B cell (primary cell): ENCODE measurements at regions of chr2 and their contacts with region 1.

Region 1: DNA sequence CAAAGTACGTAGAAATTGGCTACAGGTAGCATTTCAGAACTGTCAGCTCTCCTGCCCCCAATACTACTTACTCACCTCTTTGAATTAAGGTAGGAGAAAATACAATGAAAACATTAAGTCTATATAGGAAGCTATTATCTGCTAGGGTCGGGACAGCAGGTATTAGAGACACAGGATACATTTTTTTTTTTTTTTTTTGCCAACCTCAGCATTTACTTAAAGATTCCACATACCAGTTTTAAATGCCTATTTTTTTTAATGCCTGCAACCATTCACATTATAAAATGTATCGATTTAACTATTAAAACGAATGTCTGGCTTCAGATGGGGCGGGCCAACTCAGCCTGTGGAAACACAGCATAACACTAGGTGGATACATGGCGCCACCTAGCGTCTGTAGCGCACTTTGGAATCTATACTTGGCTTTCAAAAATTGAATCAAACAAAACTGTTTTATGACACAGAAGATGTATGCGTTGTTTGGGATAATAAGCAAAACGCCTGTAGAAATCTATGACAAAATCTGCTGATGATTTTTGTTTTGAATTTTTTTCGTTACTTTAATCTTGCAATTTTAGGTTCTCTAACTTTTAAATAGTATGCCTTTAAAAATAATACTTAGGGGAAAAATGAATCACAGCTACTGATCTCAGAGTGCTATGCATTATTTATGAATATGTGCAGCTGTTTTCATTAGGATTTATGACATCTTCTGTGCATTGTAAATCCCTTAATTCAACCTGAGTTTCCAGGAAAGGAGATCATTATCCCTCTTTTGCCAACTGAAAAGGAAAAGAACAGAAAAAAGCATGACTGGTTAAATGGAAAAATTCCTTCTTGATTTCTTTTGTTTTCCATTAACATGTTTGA is 261.0 kb downstream of the NYAP2 start:
- DNase-seq: peak; percentile 75
- ATAC-seq: peak; percentile 71
- H3K4me3 ChIP-seq: no peak overlapping the region
- H3K4me3 Mint-ChIP-seq: no peak overlapping the region
- H3K27ac ChIP-seq: no peak overlapping the region
- H3K27ac Mint-ChIP-seq: no peak overlapping the region
- H3K4me1 ChIP-seq: no peaks in the 10 kb centered on the region
- H3K4me1 Mint-ChIP-seq: no peaks in the 10 kb centered on the region
- H3K27me3 ChIP-seq: peaks cover 0 to 5% (median 0%) of the 10 kb centered on the region in 4 experiments
- H3K27me3 Mint-ChIP-seq: peaks cover 22% of the 10 kb centered on the region
- CTCF ChIP-seq: peak; percentile 97

Region 2: DNA sequence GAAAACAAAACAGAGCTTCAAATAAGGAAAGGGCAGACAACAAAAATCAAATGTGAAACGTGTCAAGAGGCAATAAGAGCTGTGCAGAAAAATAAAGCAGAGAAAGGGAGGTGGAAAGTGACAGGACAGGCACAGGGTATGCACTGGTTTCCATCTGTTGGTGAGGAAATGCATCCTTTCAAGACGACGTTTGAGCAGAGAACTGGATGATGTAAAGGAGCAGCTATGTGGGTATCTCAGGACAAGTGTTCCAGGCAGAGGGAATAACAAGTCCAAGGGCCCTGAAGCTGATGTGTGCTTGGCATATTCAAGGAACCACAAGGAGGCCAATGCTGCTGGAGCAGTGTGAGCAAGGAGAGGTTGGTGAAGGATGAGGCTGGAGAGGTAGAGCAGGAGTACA is 1452.5 kb before region 1 on chr2:
- CTCF ChIA-PET with region 1: no interaction called
- POLR2A ChIA-PET with region 1: interaction called, 11 read pairs
- intact Hi-C with region 1: no loop called
- DNase-seq: no peak
- ATAC-seq: no peak
- H3K4me3 ChIP-seq: no peak overlapping the region
- H3K4me3 Mint-ChIP-seq: no peak overlapping the region
- H3K27ac ChIP-seq: no peak overlapping the region
- H3K27ac Mint-ChIP-seq: no peak overlapping the region
- H3K4me1 ChIP-seq: no peaks in the 10 kb centered on the region
- H3K4me1 Mint-ChIP-seq: no peaks in the 10 kb centered on the region
- H3K27me3 ChIP-seq: no peaks in the 10 kb centered on the region
- H3K27me3 Mint-ChIP-seq: peaks cover 4% of the 10 kb centered on the region
- CTCF ChIP-seq: no peak

Region 3: GRCh38 chr2:224357098-224357901 is 1303.2 kb before region 1 on chr2:
- CTCF ChIA-PET with region 1: no interaction called
- POLR2A ChIA-PET with region 1: no interaction called
- intact Hi-C with region 1: loop called (anchors 1 kb)
- DNase-seq: peak; percentile 79
- ATAC-seq: peak; percentile 81
- H3K4me3 ChIP-seq: no peak overlapping the region
- H3K4me3 Mint-ChIP-seq: no peak overlapping the region
- H3K27ac ChIP-seq: no peak overlapping the region
- H3K27ac Mint-ChIP-seq: no peak overlapping the region
- H3K4me1 ChIP-seq: no peaks in the 10 kb centered on the region
- H3K4me1 Mint-ChIP-seq: no peaks in the 10 kb centered on the region
- H3K27me3 ChIP-seq: no peaks in the 10 kb centered on the region
- H3K27me3 Mint-ChIP-seq: peaks cover 11% of the 10 kb centered on the region
- CTCF ChIP-seq: peak; percentile 87

Region 4: GRCh38 chr2:224927646-224928173 is 732.8 kb before region 1 on chr2:
- CTCF ChIA-PET with region 1: interaction called, 4 read pairs
- POLR2A ChIA-PET with region 1: no interaction called
- intact Hi-C with region 1: loop called (anchors 2 kb)
- DNase-seq: no peak
- ATAC-seq: no peak
- H3K4me3 ChIP-seq: no peak overlapping the region
- H3K4me3 Mint-ChIP-seq: peak overlapping the region; percentile 4
- H3K27ac ChIP-seq: peak overlapping the region; percentile 38 to 43
- H3K27ac Mint-ChIP-seq: peak overlapping the region; percentile 78
- H3K4me1 ChIP-seq: peaks cover 86 to 87% of the 10 kb centered on the region in 2 donors
- H3K4me1 Mint-ChIP-seq: peaks cover 94% of the 10 kb centered on the region
- H3K27me3 ChIP-seq: no peaks in the 10 kb centered on the region
- H3K27me3 Mint-ChIP-seq: no peaks in the 10 kb centered on the region
- CTCF ChIP-seq: no peak

Region 5: GRCh38 chr2:225122583-225123486 is 537.7 kb before region 1 on chr2:
- CTCF ChIA-PET with region 1: interaction called, 21 read pairs
- POLR2A ChIA-PET with region 1: no interaction called
- intact Hi-C with region 1: loop called (anchors 1 kb)
- DNase-seq: peak; percentile 20
- ATAC-seq: no peak
- H3K4me3 ChIP-seq: no peak overlapping the region
- H3K4me3 Mint-ChIP-seq: no peak overlapping the region
- H3K27ac ChIP-seq: no peak overlapping the region
- H3K27ac Mint-ChIP-seq: no peak overlapping the region
- H3K4me1 ChIP-seq: no peaks in the 10 kb centered on the region
- H3K4me1 Mint-ChIP-seq: no peaks in the 10 kb centered on the region
- H3K27me3 ChIP-seq: no peaks in the 10 kb centered on the region
- H3K27me3 Mint-ChIP-seq: peaks cover 14% of the 10 kb centered on the region
- CTCF ChIP-seq: peak; percentile 63

Region 6: DNA sequence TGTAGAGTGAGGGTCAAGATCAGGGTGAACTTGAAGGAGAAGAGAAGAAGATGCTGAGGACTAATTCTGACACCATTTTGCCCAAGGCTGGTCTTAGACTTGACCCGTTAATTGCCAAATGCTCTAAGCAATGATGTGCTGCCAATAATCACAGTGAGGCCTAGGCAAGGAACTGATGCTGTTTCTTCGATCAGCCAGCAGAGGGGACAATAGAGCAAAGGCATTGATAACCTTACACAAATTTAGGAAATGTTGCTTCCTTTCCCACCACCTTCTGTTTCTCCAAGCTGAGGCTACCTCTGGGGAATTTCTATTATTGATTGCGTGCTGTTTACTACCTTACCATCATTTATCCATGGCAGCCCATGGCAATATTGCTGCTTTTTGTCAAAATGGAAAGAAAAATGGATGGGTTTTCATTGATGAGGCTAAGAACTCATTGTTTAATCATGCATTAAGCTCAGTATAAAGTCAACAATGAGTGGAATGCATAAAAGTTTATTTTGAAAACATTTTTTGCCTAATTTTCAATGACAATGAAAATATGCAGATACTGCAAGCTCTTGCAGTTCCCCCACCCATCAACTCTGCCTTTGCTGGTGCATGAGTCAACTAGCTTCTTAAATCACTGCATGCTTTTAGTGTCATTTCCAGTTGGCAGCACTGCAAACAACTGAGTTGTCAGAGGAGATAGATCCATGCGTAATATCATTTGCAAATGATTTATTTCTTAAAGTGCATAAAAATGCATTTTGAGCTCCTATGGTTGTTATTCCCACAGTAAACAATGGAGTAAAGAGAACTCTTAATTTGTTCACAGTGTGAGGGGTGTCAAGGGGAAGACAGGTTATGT is 377.4 kb before region 1 on chr2:
- CTCF ChIA-PET with region 1: interaction called, 11 read pairs
- POLR2A ChIA-PET with region 1: no interaction called
- intact Hi-C with region 1: loop called (anchors 5 kb)
- DNase-seq: peak; percentile 35
- ATAC-seq: no peak
- H3K4me3 ChIP-seq: no peak overlapping the region
- H3K4me3 Mint-ChIP-seq: no peak overlapping the region
- H3K27ac ChIP-seq: no peak overlapping the region
- H3K27ac Mint-ChIP-seq: no peak overlapping the region
- H3K4me1 ChIP-seq: no peaks in the 10 kb centered on the region
- H3K4me1 Mint-ChIP-seq: no peaks in the 10 kb centered on the region
- H3K27me3 ChIP-seq: peaks cover 0 to 2% (median under 1%) of the 10 kb centered on the region in 4 experiments
- H3K27me3 Mint-ChIP-seq: no peaks in the 10 kb centered on the region
- CTCF ChIP-seq: peak; percentile 80

Region 7: GRCh38 chr2:225649274-225649673 is 11.2 kb before region 1 on chr2:
- CTCF ChIA-PET with region 1: interaction called, 27 read pairs
- POLR2A ChIA-PET with region 1: no interaction called
- intact Hi-C with region 1: no loop called
- DNase-seq: no peak
- ATAC-seq: no peak
- H3K4me3 ChIP-seq: no peak overlapping the region
- H3K4me3 Mint-ChIP-seq: no peak overlapping the region
- H3K27ac ChIP-seq: no peak overlapping the region
- H3K27ac Mint-ChIP-seq: no peak overlapping the region
- H3K4me1 ChIP-seq: no peaks in the 10 kb centered on the region
- H3K4me1 Mint-ChIP-seq: no peaks in the 10 kb centered on the region
- H3K27me3 ChIP-seq: peaks cover 0 to 5% (median 1%) of the 10 kb centered on the region in 4 experiments
- H3K27me3 Mint-ChIP-seq: peaks cover 4% of the 10 kb centered on the region
- CTCF ChIP-seq: no peak

Region 8: GRCh38 chr2:225693259-225693658 is 32.8 kb after region 1 on chr2:
- CTCF ChIA-PET with region 1: no interaction called
- POLR2A ChIA-PET with region 1: no interaction called
- intact Hi-C with region 1: no loop called
- DNase-seq: no peak
- ATAC-seq: no peak
- H3K4me3 ChIP-seq: no peak overlapping the region
- H3K4me3 Mint-ChIP-seq: no peak overlapping the region
- H3K27ac ChIP-seq: no peak overlapping the region
- H3K27ac Mint-ChIP-seq: no peak overlapping the region
- H3K4me1 ChIP-seq: no peaks in the 10 kb centered on the region
- H3K4me1 Mint-ChIP-seq: no peaks in the 10 kb centered on the region
- H3K27me3 ChIP-seq: no peaks in the 10 kb centered on the region
- H3K27me3 Mint-ChIP-seq: peaks cover 8% of the 10 kb centered on the region
- CTCF ChIP-seq: no peak